K562 (cell line): ENCODE measurements at regions of chr9 and their contacts with region 1.

Region 1: GRCh38 chr9:128370826-128371621 is at the start of gene URM1:
- DNase-seq: peak; percentile 94 to 98 (median 96)
- ATAC-seq: peak; percentile 98
- H3K4me3 ChIP-seq: peak within 1 kb of the TSS; percentile 84
- H3K27ac ChIP-seq: peak within 1 kb of the TSS; percentile 77
- H3K4me1 ChIP-seq: peaks cover 13 to 14% of the 10 kb centered on the region in 2 experiments
- H3K27me3 ChIP-seq: no peaks in the 10 kb centered on the region
- CTCF ChIP-seq: no peak
- EP300 ChIP-seq: no peak
- POLR2A ChIP-seq: peak; percentile 81
- RAD21 ChIP-seq: no peak
- polyA plus RNA-seq, gene URM1: 10.1 to 24.7 TPM

Region 2: GRCh38 chr9:127770905-127771569 is 600.0 kb before region 1 on chr9:
- CTCF ChIA-PET with region 1: no interaction called
- POLR2A ChIA-PET with region 1: no interaction called
- in situ Hi-C with region 1: loop called (anchors 25 kb)
- intact Hi-C with region 1: no loop called
- DNase-seq: peak; percentile 96 to 98 (median 97)
- ATAC-seq: peak; percentile 98
- H3K4me3 ChIP-seq: peak overlapping the region; percentile 55
- H3K27ac ChIP-seq: peak overlapping the region; percentile 47; the same call in 2 of the 3 replicates
- H3K4me1 ChIP-seq: peaks cover 18 to 28% of the 10 kb centered on the region in 2 experiments
- H3K27me3 ChIP-seq: no peaks in the 10 kb centered on the region
- CTCF ChIP-seq: no peak; a peak in 1 of 6 replicates
- EP300 ChIP-seq: peak; percentile 61; the same call in 1 of the 2 replicates
- POLR2A ChIP-seq: no peak
- RAD21 ChIP-seq: no peak

Region 3: GRCh38 chr9:128438343-128439109 is 67.5 kb after region 1 on chr9:
- CTCF ChIA-PET with region 1: no interaction called
- POLR2A ChIA-PET with region 1: no interaction called
- in situ Hi-C with region 1: no loop called
- intact Hi-C with region 1: no loop called
- DNase-seq: peak; percentile 86 to 92 (median 88)
- ATAC-seq: peak; percentile 97
- H3K4me3 ChIP-seq: no peak overlapping the region
- H3K27ac ChIP-seq: no peak overlapping the region
- H3K4me1 ChIP-seq: peaks cover 3 to 25% of the 10 kb centered on the region in 2 experiments; a peak in 4 of 5 replicates
- H3K27me3 ChIP-seq: no peaks in the 10 kb centered on the region
- CTCF ChIP-seq: peak; percentile 88 to 92 (median 90)
- EP300 ChIP-seq: no peak
- POLR2A ChIP-seq: no peak
- RAD21 ChIP-seq: peak; percentile 72 to 87